ENCODE measurements at regions of chr2 and their contacts with region 1.

Region 1: GRCh38 chr2:86764661-86765307 is 25.9 kb downstream of the CD8A start:
- DNase-seq: peak; percentile 47
- H3K4me3 Mint-ChIP-seq: no peak overlapping the region
- H3K27ac Mint-ChIP-seq: no peak overlapping the region
- H3K4me1 Mint-ChIP-seq: no peaks in the 10 kb centered on the region
- H3K27me3 Mint-ChIP-seq: no peaks in the 10 kb centered on the region
- CTCF ChIP-seq: peak; percentile 49

Region 2: GRCh38 chr2:86753606-86754005 is 11.2 kb before region 1 on chr2:
- CTCF ChIA-PET with region 1: interaction called, 50 read pairs
- POLR2A ChIA-PET with region 1: interaction called, 4 read pairs
- intact Hi-C with region 1: no loop called
- DNase-seq: no peak
- H3K4me3 Mint-ChIP-seq: no peak overlapping the region
- H3K27ac Mint-ChIP-seq: no peak overlapping the region
- H3K4me1 Mint-ChIP-seq: no peaks in the 10 kb centered on the region
- H3K27me3 Mint-ChIP-seq: no peaks in the 10 kb centered on the region
- CTCF ChIP-seq: no peak

Region 3: DNA sequence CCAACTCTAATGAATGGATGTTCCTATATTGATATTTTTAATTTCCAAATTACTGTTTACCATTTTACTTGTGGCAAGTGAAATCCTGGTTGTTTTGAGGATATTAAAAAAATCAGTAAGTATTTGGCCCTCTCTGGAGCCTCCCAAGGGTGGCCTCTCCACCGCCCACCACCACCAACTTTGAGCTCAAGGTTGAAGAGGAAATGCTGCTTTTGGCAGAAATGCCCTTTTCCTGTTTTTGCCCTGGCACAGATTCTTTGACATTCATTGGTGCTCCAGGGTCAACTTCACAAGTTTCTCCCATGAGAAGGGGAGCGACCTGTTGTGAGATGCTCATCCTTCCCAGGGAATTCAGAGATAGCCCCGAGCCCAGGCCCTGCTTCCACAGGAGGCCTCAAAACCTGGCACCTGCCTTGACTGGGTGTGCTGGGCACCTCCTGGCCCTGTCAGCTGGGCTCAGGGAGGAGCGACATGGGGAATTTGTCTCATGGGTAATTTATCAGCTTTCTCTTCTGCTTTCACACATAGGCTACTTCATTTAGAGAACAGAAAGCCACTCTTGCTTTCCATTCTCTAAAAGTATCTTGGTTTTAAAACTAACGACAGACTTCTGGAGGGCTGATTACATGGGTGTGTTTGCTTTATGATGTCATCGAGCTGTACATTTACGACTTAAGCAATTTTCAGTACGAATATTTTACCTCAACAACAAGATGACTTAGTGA is 19.0 kb after region 1 on chr2:
- CTCF ChIA-PET with region 1: interaction called, 11 read pairs
- POLR2A ChIA-PET with region 1: interaction called, 3 read pairs
- intact Hi-C with region 1: no loop called
- DNase-seq: no peak
- H3K4me3 Mint-ChIP-seq: no peak overlapping the region
- H3K27ac Mint-ChIP-seq: no peak overlapping the region
- H3K4me1 Mint-ChIP-seq: no peaks in the 10 kb centered on the region
- H3K27me3 Mint-ChIP-seq: peaks cover 11% of the 10 kb centered on the region
- CTCF ChIP-seq: no peak

Region 4: DNA sequence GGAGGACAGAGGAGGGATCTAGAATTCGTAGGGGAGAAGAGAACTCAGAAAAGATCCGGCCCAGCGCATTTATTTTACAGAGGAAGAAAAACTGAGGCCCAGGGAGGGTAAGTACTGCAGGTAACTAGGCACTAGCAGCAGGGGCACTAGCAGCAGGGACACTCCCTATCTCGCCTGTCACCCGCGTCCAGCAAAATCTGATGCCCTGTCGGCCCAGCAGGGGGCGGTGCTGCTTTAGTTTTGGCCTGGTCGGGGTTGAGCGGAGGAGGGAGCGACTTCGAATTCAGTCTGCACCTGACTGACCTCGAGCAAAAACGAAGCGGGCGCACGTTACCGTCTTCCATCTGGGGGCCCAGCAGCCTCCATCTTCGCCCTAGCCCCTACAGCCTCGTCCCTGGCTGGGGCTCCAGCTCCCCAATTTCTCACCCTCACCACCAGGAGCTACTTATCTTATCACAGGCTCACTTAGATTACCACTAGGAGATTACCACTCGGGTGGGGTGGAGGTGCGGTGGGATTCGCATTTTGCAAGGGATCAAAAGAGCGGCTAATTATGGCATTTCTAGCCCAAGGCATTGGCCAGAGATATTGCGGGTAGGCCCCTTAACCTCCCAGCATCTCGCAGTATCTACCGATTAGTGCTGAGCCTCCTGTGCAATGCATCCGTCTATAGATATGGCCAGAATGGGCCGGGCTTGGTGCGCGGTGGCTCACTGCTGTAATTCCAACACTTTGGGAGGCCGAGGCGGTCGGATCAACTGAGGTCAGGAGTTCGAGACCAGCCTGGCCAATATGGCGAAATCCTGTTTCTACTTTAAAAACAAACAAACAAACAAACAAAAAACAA is 43.8 kb after region 1 on chr2:
- CTCF ChIA-PET with region 1: interaction called, 12 read pairs
- POLR2A ChIA-PET with region 1: no interaction called
- intact Hi-C with region 1: no loop called
- DNase-seq: peak; percentile 87
- H3K4me3 Mint-ChIP-seq: peak overlapping the region; percentile 71
- H3K27ac Mint-ChIP-seq: no peak overlapping the region
- H3K4me1 Mint-ChIP-seq: peaks cover 6% of the 10 kb centered on the region
- H3K27me3 Mint-ChIP-seq: no peaks in the 10 kb centered on the region
- CTCF ChIP-seq: peak; percentile 97